ENCODE measurements at regions of chr12 and their contacts with region 1.

Region 1: DNA sequence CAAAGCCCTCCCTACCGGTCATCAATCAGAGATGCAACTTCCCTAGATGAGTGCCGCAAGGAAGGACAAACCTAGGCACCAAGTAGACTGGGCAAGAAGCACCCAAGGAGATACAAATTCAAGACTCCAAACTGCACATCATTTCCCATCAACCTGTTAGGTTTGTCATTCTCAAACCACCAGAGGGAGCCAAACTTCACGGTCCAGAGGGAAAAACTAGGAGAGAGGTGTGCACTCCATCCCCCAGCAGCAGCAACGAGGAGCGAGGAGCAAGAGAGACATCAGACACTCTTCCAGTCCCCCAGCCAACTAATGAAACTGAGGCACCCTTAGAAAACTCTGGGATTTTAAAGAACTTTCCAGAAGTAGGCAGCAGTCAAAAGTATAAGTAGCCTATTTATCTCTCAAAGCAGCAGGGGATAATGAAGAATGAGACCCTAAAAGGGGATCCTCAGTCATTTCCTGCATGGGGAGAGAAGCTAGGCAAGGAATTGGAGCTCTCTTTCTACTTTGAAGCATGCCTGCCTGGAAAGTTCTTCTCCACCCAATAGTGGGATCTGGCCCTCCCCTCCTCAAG is 37.0 kb upstream of the NT5DC3 start:
- DNase-seq: peak; percentile 5 to 80 (median 48)
- ATAC-seq: peak; percentile 64
- H3K4me3 ChIP-seq: no peak overlapping the region
- H3K4me3 Mint-ChIP-seq: no peak overlapping the region
- H3K27ac ChIP-seq: no peak overlapping the region
- H3K27ac Mint-ChIP-seq: no peak overlapping the region
- H3K4me1 ChIP-seq: peaks cover 6% of the 10 kb centered on the region
- H3K4me1 Mint-ChIP-seq: peaks cover 10% of the 10 kb centered on the region
- H3K27me3 ChIP-seq: no peaks in the 10 kb centered on the region
- H3K27me3 Mint-ChIP-seq: no peaks in the 10 kb centered on the region
- CTCF ChIP-seq: peak; percentile 70

Region 2: DNA sequence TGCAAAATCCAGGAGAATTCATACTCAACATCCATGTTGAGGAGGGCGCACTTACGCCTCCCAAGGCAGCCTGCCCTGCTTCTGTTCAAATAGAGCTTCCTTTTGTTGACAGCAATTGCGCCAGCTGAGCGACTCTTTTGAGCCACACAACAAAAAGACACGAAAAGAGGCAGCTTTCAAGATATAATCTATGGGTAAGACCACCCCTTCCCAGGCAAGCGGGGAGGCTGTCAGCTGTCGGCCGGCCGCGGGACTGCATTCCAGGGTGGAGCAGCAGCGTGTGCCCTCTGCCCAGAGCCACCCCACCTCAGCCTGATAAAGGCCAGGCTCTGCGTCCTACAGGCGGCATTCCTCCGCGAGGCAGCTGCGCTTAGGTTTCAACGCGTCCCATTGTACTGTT is 306.7 kb before region 1 on chr12:
- CTCF ChIA-PET with region 1: interaction called, 3 read pairs
- POLR2A ChIA-PET with region 1: no interaction called
- intact Hi-C with region 1: loop called (anchors 5 to 10 kb)
- DNase-seq: no peak
- ATAC-seq: no peak
- H3K4me3 ChIP-seq: no peak overlapping the region
- H3K4me3 Mint-ChIP-seq: no peak overlapping the region
- H3K27ac ChIP-seq: no peak overlapping the region
- H3K27ac Mint-ChIP-seq: no peak overlapping the region
- H3K4me1 ChIP-seq: no peaks in the 10 kb centered on the region
- H3K4me1 Mint-ChIP-seq: peaks cover 4% of the 10 kb centered on the region
- H3K27me3 ChIP-seq: peaks cover 0 to 3% of the 10 kb centered on the region in 2 experiments
- H3K27me3 Mint-ChIP-seq: peaks cover 70% of the 10 kb centered on the region
- CTCF ChIP-seq: no peak

Region 3: DNA sequence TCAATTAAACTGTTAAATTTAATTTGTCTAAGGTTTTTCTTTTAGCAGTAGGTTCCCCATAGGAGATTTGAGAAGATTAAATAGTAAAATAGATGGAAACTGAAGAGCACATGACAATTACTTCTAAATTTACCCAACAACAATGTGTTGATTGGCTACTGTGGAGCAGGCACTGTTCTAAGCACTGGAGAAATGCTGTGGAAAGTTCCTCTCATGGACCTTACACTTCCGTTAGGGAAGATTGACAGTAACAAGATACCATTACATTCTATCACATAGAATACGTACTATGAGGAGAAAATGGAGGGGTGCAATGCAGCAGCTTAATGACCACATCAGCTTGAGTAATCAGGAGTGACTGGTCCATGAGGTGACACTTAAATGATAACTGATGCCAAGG is 299.1 kb before region 1 on chr12:
- CTCF ChIA-PET with region 1: no interaction called
- POLR2A ChIA-PET with region 1: no interaction called
- intact Hi-C with region 1: loop called (anchors 5 to 10 kb)
- DNase-seq: no peak
- ATAC-seq: no peak
- H3K4me3 ChIP-seq: no peak overlapping the region
- H3K4me3 Mint-ChIP-seq: no peak overlapping the region
- H3K27ac ChIP-seq: no peak overlapping the region
- H3K27ac Mint-ChIP-seq: no peak overlapping the region
- H3K4me1 ChIP-seq: no peaks in the 10 kb centered on the region
- H3K4me1 Mint-ChIP-seq: peaks cover 4% of the 10 kb centered on the region
- H3K27me3 ChIP-seq: peaks cover 0 to 3% of the 10 kb centered on the region in 2 experiments
- H3K27me3 Mint-ChIP-seq: peaks cover 29% of the 10 kb centered on the region
- CTCF ChIP-seq: no peak

Region 4: GRCh38 chr12:104303538-104304151 is 425.6 kb after region 1 on chr12 and contains the start of gene EID3:
- CTCF ChIA-PET with region 1: no interaction called
- POLR2A ChIA-PET with region 1: no interaction called
- intact Hi-C with region 1: no loop called
- DNase-seq: peak; percentile 78 to 92 (median 91)
- ATAC-seq: peak; percentile 96
- H3K4me3 ChIP-seq: peak within 1 kb of the TSS; percentile 63 to 74
- H3K4me3 Mint-ChIP-seq: peak within 1 kb of the TSS; percentile 95
- H3K27ac ChIP-seq: peak within 1 kb of the TSS; percentile 60 to 80
- H3K27ac Mint-ChIP-seq: peak within 1 kb of the TSS; percentile 98
- H3K4me1 ChIP-seq: peaks cover 27% of the 10 kb centered on the region
- H3K4me1 Mint-ChIP-seq: peaks cover 62% of the 10 kb centered on the region
- H3K27me3 ChIP-seq: no peaks in the 10 kb centered on the region
- H3K27me3 Mint-ChIP-seq: no peaks in the 10 kb centered on the region
- CTCF ChIP-seq: no peak
- total RNA-seq, gene EID3: 11.7 to 13.0 TPM

Measured in CD8-positive, alpha-beta T cell (primary cell).